ENCODE measurements at regions of chr1 and their contacts with region 1.

Region 1: DNA sequence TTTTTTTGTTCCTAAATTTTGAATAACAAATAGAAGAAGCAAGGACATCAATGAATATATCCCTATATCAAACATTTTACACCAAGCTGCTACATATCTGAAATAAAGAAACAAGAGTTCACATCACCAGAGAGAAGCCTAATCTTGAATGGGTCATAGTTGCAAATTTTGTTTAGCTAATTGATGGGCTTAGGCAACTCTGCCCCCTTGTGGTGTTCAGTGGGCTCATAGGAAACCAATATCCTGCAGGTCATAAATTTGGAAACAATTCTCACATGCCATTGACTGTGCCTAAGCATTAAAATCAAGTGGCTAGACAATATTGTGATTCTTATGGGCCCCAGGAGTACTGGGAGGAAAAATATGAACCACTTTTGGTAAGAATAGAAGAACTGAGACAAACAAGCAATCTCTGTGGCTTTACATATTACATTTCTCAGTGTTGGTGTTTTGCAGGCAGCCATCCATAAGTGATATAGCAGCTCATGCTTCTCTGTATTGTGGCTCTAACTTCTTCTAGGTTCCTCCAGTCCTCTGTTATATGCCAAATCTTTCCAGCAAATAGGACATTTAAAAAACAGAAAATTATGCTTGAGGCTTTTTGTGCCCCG is 1262.8 kb upstream of the PRMT6 start:
- DNase-seq: peak; percentile 55
- H3K4me3 Mint-ChIP-seq: no peak overlapping the region
- H3K27ac Mint-ChIP-seq: no peak overlapping the region
- H3K4me1 Mint-ChIP-seq: no peaks in the 10 kb centered on the region
- H3K27me3 Mint-ChIP-seq: no peaks in the 10 kb centered on the region

Region 2: GRCh38 chr1:104780470-104781078 is 1013.1 kb before region 1 on chr1:
- intact Hi-C with region 1: loop called (anchors 5 kb)
- DNase-seq: peak; percentile 56
- H3K4me3 Mint-ChIP-seq: no peak overlapping the region
- H3K27ac Mint-ChIP-seq: no peak overlapping the region
- H3K4me1 Mint-ChIP-seq: no peaks in the 10 kb centered on the region
- H3K27me3 Mint-ChIP-seq: no peaks in the 10 kb centered on the region